ENCODE measurements at regions of chrX and their contacts with region 1.

Region 1: DNA sequence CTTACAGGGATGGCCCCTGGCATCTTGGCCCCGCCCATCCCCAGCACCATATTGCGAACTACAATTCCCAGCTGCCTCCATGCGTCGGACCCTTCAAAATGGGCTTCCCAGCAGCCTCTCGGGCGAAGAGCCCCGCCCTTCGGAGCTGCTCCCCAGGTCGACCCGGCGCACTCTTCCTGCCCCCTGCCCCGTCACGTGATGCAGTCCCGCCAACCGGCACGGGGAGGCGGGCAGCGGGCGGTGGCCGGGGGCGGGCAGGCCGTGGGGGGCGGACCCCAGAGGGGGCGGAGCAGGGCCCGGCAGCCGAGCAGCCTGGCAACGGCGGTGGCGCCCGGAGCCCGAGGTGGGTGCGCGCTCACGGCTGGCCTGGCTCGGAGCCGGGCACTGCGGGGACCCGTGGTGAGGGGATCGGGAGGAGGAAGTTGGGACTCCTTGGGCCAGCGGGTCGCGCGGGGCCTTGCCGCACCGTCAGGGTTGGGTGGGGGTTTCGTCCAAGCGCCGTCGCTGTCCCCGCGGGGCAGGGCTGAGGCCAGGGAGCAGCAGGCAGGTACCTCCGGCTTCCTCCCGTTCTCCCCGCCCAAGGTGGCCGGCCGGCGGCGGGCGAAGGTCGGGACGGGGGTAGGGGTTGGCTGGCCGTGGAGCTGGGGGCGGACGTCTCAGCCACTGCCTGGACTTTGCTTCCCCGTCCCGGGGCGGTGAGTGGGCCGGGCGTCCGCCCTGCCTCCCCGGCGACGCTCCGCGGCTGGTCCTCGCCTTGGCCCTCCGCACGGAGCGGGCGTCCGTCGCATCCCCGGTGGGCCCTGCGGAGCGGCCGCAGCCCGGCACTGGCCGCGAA is at the start of gene MTM1:
- DNase-seq: peak; percentile 95
- ATAC-seq: peak; percentile 92
- H3K4me3 Mint-ChIP-seq: peak within 1 kb of the TSS; percentile 75
- H3K27ac Mint-ChIP-seq: peak within 1 kb of the TSS; percentile 85
- H3K4me1 Mint-ChIP-seq: peaks cover 34% of the 10 kb centered on the region
- H3K27me3 Mint-ChIP-seq: no peaks in the 10 kb centered on the region
- total RNA-seq, gene MTM1: 23.1 to 31.3 TPM

Region 2: GRCh38 chrX:149539283-149540130 is 1029.0 kb before region 1 on chrX:
- CTCF ChIA-PET with region 1: no interaction called
- POLR2A ChIA-PET with region 1: no interaction called
- intact Hi-C with region 1: loop called in 1 of 2 experiments (anchors 2 kb)
- DNase-seq: peak; percentile 91
- ATAC-seq: peak; percentile 46
- H3K4me3 Mint-ChIP-seq: peak overlapping the region; percentile 82
- H3K27ac Mint-ChIP-seq: peak overlapping the region; percentile 82
- H3K4me1 Mint-ChIP-seq: peaks cover 9% of the 10 kb centered on the region
- H3K27me3 Mint-ChIP-seq: no peaks in the 10 kb centered on the region

Region 3: DNA sequence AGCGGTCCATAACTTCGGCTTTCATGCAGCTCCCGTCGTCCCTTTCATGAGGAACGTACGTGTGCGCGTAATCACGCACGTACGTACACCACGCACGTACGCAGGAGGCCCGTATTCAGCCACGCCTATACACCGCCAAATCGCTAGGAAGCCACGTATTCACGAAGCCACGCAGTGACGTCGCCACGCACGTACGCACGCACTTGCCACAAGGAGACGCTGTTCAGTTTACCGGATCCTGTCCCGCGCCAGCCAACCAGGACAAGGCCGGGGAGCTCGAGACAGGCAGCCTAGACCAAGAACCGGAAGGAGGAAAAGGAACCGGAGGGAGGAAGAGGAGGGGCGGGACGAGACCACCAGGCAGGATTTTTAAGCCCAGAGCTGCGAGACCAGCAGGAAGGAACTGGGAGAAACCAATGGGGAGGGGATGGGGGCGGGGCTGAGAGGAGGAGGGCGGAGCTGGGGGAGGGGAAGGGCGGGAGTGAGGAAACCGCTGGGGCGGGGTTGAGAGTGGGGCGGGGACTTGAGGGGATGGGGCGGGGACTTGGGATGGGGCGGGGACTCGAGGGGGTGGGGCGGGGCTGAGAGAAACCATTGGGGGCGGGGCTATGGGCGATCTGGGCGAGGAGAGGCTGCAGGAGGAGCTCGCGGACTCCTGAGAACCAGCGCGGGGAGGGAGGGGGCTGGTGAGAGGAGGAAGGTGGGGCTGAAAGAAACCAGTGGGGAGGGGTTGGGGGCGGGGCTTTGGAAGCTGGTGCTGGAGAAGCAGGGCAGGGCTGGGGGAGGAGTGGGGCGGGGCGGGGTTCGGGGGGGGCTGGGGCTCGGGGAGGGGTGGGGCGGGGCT is 629.9 kb before region 1 on chrX and contains the start of gene EOLA2:
- CTCF ChIA-PET with region 1: no interaction called
- POLR2A ChIA-PET with region 1: no interaction called
- intact Hi-C with region 1: loop called in 1 of 2 experiments (anchors 2 kb)
- DNase-seq: peak; percentile 94
- ATAC-seq: peak; percentile 58
- H3K4me3 Mint-ChIP-seq: peak within 1 kb of the TSS; percentile 82
- H3K27ac Mint-ChIP-seq: peak within 1 kb of the TSS; percentile 98
- H3K4me1 Mint-ChIP-seq: peaks cover 3% of the 10 kb centered on the region
- H3K27me3 Mint-ChIP-seq: no peaks in the 10 kb centered on the region
- total RNA-seq, gene EOLA2: 11.5 to 27.7 TPM

Region 4: DNA sequence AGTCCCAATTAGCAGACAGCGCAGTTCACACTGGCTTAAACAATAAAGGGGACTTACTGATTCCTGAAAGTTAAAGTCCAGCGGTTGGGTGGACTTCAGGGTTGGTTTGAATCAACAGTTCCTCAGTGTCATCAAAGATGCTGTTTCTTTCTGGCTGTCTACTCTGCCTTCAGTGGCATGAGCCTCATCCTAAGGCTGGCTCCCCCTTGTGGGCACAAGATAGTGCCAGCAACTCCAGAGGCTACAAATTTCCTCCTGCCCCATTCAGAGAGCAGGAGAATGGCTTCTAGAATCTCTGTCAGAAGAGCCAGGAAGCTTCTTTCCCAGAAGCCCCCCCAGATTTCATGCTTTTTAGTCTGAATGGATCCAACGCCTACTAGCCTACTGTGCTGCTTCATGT is 82.5 kb before region 1 on chrX:
- CTCF ChIA-PET with region 1: interaction called, 3 read pairs
- POLR2A ChIA-PET with region 1: no interaction called
- intact Hi-C with region 1: loop called in 1 of 2 experiments (anchors 1 kb)
- DNase-seq: peak; percentile 66
- ATAC-seq: peak; percentile 28
- H3K4me3 Mint-ChIP-seq: no peak overlapping the region
- H3K27ac Mint-ChIP-seq: no peak overlapping the region
- H3K4me1 Mint-ChIP-seq: peaks cover 26% of the 10 kb centered on the region
- H3K27me3 Mint-ChIP-seq: no peaks in the 10 kb centered on the region

Region 5: DNA sequence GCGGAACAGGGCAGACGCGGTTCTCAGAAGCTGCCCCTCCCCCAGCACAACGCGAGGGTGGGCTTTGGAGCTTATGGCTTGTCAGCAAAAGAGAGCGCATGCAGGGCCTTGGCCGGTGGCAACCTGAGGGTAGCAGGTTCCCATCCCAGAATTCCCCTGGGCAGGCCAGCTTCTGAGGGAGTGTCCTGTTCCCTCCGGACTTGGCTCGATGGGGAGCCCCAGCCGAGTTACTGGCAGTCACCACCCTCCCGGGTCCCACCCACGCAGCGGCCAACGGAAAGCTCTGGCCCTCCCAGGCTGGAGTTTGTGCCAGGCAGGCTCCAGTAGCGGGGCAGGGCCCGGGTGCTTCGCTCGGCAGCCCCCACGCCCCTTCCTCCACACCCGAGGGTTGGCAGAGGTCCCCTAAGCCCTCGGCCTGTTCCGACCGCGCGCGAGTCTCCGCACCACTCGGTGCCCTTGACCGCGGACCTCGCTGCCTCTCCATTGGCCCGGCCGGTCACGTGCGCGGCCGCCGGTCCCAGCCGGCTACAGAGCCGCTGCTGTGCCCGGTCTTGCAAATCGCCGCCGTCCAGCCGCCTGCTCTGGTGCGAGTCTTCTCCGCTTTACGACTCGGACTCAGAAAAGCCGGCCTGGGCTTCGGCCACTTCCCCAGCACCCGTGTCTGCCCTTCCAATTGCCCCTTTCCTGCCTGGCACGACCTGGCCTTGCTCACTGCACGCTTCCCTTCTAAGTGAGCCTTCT is 21.0 kb before region 1 on chrX:
- CTCF ChIA-PET with region 1: interaction called, 4 read pairs
- POLR2A ChIA-PET with region 1: no interaction called
- intact Hi-C with region 1: loop called in 1 of 2 experiments (anchors 2 kb)
- DNase-seq: peak; percentile 37
- ATAC-seq: peak; percentile 47
- H3K4me3 Mint-ChIP-seq: peak overlapping the region; percentile 8
- H3K27ac Mint-ChIP-seq: peak overlapping the region; percentile 87
- H3K4me1 Mint-ChIP-seq: peaks cover 24% of the 10 kb centered on the region
- H3K27me3 Mint-ChIP-seq: no peaks in the 10 kb centered on the region

Region 6: DNA sequence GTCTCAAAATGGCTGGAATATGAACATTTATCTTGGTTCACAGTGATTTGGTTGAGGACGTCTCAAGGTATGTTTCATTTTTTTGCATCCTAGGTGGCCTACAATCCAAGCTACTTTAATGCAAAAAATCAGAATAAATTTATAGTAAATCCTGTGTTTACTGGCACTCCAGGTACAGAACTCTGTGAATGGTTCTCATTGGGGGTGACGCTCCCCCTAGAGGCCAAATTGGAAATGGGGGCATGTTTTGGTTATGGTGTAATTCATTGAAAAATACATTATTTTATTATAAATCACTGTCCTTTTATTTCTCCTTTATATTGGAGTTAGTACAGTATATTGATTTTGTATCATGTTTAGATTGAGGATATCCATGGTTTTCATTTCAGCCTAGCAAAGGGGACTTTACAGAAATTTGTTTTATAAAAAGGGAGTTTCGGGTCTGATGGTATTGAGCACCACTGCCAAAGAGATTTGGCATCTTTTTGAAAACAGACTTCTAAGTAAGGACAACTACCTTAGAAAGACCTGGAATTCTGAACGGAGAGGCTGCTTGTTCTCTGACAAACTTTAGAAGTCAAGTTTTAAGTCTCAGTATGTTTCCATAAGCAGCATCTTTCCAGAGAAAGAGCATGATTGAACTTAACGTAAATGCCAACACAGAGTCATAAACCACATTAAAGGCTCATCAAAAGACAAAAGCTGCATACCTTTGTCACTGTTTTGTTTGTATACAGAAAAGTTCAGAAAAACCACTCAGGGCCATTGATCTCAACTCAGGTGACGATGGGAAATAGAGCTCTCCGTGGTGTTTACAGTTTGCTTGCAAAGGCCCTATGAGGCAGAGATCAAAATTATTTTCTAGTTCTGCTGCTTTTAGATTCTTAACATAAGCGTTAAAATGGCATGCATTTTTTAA is 19.3 kb after region 1 on chrX:
- CTCF ChIA-PET with region 1: interaction called, 4 read pairs
- POLR2A ChIA-PET with region 1: no interaction called
- intact Hi-C with region 1: loop called in 1 of 2 experiments (anchors 1 kb)
- DNase-seq: peak; percentile 55
- ATAC-seq: no peak
- H3K4me3 Mint-ChIP-seq: no peak overlapping the region
- H3K27ac Mint-ChIP-seq: no peak overlapping the region
- H3K4me1 Mint-ChIP-seq: peaks cover 28% of the 10 kb centered on the region
- H3K27me3 Mint-ChIP-seq: no peaks in the 10 kb centered on the region

Measured in activated CD4-positive, alpha-beta T cell treated with anti-CD3 and anti-CD28 coated beads for 36 hours (primary cell).